Endothelial cell of umbilical vein (primary cell): ENCODE measurements at regions of chr6 and their contacts with region 1.

Region 1: GRCh38 chr6:37547564-37548061 is 47.9 kb upstream of the CCDC167 start:
- DNase-seq: peak; percentile 80
- H3K4me3 ChIP-seq: no peak overlapping the region
- H3K27ac ChIP-seq: no peak overlapping the region
- H3K4me1 ChIP-seq: peaks cover 21% of the 10 kb centered on the region
- H3K27me3 ChIP-seq: no peaks in the 10 kb centered on the region
- CTCF ChIP-seq: no peak
- POLR2A ChIP-seq: no peak

Region 2: GRCh38 chr6:37324131-37325033 is 223.2 kb before region 1 on chr6:
- CTCF ChIA-PET with region 1: interaction called, 3 read pairs
- POLR2A ChIA-PET with region 1: no interaction called
- dilution Hi-C with region 1: no loop called
- intact Hi-C with region 1: loop called (anchors 5 kb)
- DNase-seq: peak; percentile 83
- H3K4me3 ChIP-seq: no peak overlapping the region
- H3K27ac ChIP-seq: peak overlapping the region; percentile 19
- H3K4me1 ChIP-seq: peaks cover 15% of the 10 kb centered on the region
- H3K27me3 ChIP-seq: no peaks in the 10 kb centered on the region
- CTCF ChIP-seq: no peak
- POLR2A ChIP-seq: no peak

Region 3: GRCh38 chr6:37499433-37500293 is 48.0 kb before region 1 on chr6 and contains the start of gene CCDC167:
- CTCF ChIA-PET with region 1: no interaction called
- POLR2A ChIA-PET with region 1: no interaction called
- dilution Hi-C with region 1: no loop called
- intact Hi-C with region 1: loop called (anchors 5 kb)
- DNase-seq: peak; percentile 99
- H3K4me3 ChIP-seq: peak within 1 kb of the TSS; percentile 59 to 83 (median 74)
- H3K27ac ChIP-seq: peak within 1 kb of the TSS; percentile 62
- H3K4me1 ChIP-seq: peaks cover 7% of the 10 kb centered on the region
- H3K27me3 ChIP-seq: peaks cover 6 to 11% of the 10 kb centered on the region in 2 experiments
- CTCF ChIP-seq: no peak
- POLR2A ChIP-seq: no peak
- total RNA-seq, gene CCDC167: 46.6 and 52.7 TPM in 2 replicates

Region 4: GRCh38 chr6:37525460-37526357 is 21.9 kb before region 1 on chr6:
- CTCF ChIA-PET with region 1: interaction called, 3 read pairs
- POLR2A ChIA-PET with region 1: no interaction called
- dilution Hi-C with region 1: no loop called
- intact Hi-C with region 1: loop called (anchors 1 kb)
- DNase-seq: peak; percentile 30
- H3K4me3 ChIP-seq: no peak overlapping the region
- H3K27ac ChIP-seq: no peak overlapping the region
- H3K4me1 ChIP-seq: peaks cover 23% of the 10 kb centered on the region
- H3K27me3 ChIP-seq: peaks cover 5 to 16% of the 10 kb centered on the region in 2 experiments
- CTCF ChIP-seq: no peak
- POLR2A ChIP-seq: no peak

Region 5: GRCh38 chr6:37630281-37630799 is 82.7 kb after region 1 on chr6:
- CTCF ChIA-PET with region 1: no interaction called
- POLR2A ChIA-PET with region 1: no interaction called
- dilution Hi-C with region 1: no loop called
- intact Hi-C with region 1: loop called (anchors 5 kb)
- DNase-seq: peak; percentile 97
- H3K4me3 ChIP-seq: no peak overlapping the region
- H3K27ac ChIP-seq: peak overlapping the region; percentile 84
- H3K4me1 ChIP-seq: peaks cover 20% of the 10 kb centered on the region
- H3K27me3 ChIP-seq: peaks cover 0 to 5% of the 10 kb centered on the region in 2 experiments
- CTCF ChIP-seq: no peak
- POLR2A ChIP-seq: no peak